ENCODE measurements at regions of chr4 and their contacts with region 1.

Region 1: DNA sequence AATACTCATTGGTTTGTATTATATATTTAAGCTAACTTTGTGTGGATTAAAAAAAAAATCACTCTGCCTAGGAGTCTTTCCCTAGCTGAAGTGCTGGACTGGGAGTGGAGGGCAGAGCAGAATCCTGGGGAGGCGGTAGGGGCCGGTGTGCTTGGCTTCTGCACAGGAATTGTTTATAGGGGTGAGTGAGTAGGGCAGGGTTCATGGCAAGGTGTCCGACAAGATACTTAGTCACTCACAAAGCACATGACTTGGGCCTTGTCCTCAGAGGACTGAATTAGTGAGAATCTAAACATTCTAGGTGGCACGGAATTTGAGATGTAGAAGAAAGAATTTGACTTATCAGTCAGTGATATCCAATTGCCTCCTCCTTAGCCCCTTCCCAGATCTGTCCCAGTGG is 32.2 kb downstream of the FNIP2 start:
- DNase-seq: no peak
- H3K4me3 ChIP-seq: no peak overlapping the region
- H3K4me3 Mint-ChIP-seq: no peak overlapping the region
- H3K27ac Mint-ChIP-seq: no peak overlapping the region
- H3K4me1 ChIP-seq: peaks cover 19% of the 10 kb centered on the region
- H3K4me1 Mint-ChIP-seq: peaks cover 22% of the 10 kb centered on the region
- H3K27me3 ChIP-seq: no peaks in the 10 kb centered on the region
- H3K27me3 Mint-ChIP-seq: peaks cover 9% of the 10 kb centered on the region
- CTCF ChIP-seq: no peak

Region 2: GRCh38 chr4:158836018-158836369 is 34.9 kb after region 1 on chr4:
- CTCF ChIA-PET with region 1: no interaction called
- POLR2A ChIA-PET with region 1: no interaction called
- intact Hi-C with region 1: loop called (anchors 5 kb)
- DNase-seq: no peak
- H3K4me3 ChIP-seq: no peak overlapping the region
- H3K4me3 Mint-ChIP-seq: no peak overlapping the region
- H3K27ac Mint-ChIP-seq: no peak overlapping the region
- H3K4me1 ChIP-seq: peaks cover 18% of the 10 kb centered on the region
- H3K4me1 Mint-ChIP-seq: peaks cover 30% of the 10 kb centered on the region
- H3K27me3 ChIP-seq: no peaks in the 10 kb centered on the region
- H3K27me3 Mint-ChIP-seq: no peaks in the 10 kb centered on the region
- CTCF ChIP-seq: no peak